Activated T-helper 2 cell treated with anti-CD3 and anti-CD28 coated beads, Interferon-gamma antibody, Interleukin-2, Interleukin-4, amounts not matched to agents 10 μg/mL and 5 μg/mL and 100 μg/mL, durations not matched to agents 14 hours and 24 hours and 36 hours (primary cell): ENCODE measurements at regions of chr1 and their contacts with region 1.

Region 1: GRCh38 chr1:64553281-64553680 is 83.4 kb downstream of the CACHD1 start:
- DNase-seq: no peak
- H3K4me3 Mint-ChIP-seq: no peak overlapping the region
- H3K27ac Mint-ChIP-seq: no peak overlapping the region
- H3K4me1 Mint-ChIP-seq: peaks cover 20% of the 10 kb centered on the region
- H3K27me3 Mint-ChIP-seq: peaks cover 18% of the 10 kb centered on the region

Region 2: DNA sequence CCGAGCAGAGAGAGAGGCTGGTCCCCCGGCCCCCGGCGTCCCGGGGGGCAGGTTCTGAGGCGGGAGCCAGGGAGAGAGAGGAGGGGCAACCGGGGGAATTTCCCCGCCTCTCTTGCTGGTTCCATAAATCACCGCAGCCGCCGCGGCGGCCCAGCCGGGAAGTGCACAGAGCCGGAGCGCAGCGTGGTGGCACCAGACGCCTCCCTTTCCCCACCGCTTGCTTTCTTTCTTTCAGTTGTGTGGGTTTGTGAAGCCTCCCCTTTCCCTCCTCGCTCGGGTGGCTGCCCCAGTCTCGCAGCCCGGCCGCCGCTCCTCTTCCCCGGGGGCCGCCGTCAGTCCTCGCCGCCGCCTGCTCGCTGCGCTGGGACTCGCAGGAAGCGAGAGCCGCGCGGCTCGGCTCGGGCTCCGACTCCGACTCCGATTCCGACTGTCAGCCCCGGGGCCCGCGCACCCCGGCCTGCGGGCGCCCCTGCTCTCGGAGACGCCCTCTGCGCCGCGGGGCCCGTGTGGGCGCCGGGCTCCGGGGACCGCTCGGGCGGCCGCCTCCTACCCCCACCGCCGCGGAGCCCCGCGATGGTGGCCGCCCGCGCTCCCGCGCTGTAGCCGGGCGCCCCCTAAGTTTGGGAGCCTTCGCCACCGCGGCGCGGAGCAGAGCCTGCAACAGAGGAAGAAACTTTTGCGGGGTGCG is 83.2 kb before region 1 on chr1 and contains the start of gene CACHD1:
- intact Hi-C with region 1: loop called (anchors 5 kb)
- DNase-seq: peak; percentile 32
- H3K4me3 Mint-ChIP-seq: peak within 1 kb of the TSS; percentile 83
- H3K27ac Mint-ChIP-seq: no peak within 1 kb of the TSS
- H3K4me1 Mint-ChIP-seq: peaks cover 10% of the 10 kb centered on the region
- H3K27me3 Mint-ChIP-seq: peaks cover 63% of the 10 kb centered on the region
- total RNA-seq, gene CACHD1: 0.14 TPM in 2 replicates